GM10248 (cell line): ENCODE measurements at regions of chr2 and their contacts with region 1.

Region 1: DNA sequence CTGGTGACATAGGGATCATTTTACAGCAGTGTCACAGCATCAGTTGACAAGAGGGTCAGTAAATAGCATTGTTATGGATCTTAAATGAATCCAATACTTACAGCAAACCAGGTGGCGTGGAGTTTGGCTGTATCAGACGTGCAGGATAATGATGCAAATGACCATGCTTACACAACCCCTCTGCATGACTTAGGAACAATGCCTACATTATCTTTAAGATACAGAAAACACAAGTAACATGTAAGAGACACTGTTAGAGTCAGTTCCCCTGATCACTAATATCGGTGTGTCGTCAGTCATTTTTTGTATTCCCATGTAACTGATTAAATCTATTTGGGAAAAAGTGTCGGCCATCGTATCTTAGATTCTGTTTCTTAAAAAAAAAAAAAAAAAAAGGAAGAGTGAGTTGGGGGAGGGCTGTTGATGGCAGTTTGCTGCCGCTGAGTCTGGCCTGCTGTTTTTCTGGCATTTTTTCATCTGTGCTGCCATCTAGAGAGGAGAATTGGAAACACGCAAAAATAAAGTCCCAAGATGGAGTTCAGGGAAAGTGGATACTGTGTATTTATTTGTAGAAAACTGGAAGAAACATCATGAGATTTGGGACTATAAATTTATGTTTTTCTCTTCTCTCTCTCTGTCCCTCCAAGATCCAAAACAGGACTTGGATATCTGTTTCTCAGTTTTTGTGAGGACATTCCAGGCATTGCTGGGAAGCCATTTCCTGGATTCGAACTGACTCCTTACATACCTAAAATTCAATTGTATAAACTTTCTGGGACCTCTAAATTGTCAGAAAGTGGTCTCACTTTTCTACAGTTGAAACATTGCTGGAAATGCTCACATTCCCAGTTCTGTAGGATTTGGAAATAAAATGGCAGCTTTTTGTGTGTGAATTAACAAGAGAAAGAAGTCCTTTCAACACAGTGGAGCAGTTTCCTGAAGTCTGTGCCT is 60.3 kb upstream of the AGPS start:
- DNase-seq: peak; percentile 50
- CTCF ChIP-seq: peak; percentile 66

Region 2: DNA sequence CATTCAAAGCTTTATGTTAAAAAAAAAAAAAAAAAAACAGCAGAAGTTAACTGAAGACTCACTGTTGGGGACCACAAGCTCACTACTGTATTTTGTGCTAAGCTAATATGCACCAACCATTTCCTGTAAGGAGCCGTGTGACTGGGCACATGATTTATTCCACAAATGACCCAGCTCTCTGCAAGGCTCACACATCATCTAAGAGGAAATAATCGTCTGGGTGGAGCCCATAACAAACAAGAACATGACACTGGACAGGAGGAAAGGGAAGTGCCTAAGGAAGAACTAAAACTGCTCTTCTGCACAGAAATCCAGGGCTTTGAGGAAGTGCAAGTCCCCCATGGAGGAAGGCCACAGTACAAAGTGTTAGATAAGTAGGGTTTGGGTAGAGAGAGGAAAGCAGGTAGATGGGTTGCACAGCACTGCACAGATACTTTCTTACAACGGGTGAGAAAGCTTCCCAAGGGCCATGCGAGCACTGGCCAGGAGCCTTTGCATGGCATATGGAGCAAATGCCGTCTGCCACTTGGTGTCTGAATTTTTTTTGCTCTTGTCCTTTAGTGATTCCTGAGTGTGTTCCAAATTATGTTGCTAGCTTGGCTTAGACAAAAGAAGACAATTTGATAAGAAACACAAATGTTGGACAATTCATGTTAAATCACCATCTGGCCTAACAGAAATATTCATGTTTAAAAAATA is 92.2 kb before region 1 on chr2:
- CTCF ChIA-PET with region 1: no interaction called
- POLR2A ChIA-PET with region 1: no interaction called
- DNase-seq: no peak
- CTCF ChIP-seq: no peak

Region 3: DNA sequence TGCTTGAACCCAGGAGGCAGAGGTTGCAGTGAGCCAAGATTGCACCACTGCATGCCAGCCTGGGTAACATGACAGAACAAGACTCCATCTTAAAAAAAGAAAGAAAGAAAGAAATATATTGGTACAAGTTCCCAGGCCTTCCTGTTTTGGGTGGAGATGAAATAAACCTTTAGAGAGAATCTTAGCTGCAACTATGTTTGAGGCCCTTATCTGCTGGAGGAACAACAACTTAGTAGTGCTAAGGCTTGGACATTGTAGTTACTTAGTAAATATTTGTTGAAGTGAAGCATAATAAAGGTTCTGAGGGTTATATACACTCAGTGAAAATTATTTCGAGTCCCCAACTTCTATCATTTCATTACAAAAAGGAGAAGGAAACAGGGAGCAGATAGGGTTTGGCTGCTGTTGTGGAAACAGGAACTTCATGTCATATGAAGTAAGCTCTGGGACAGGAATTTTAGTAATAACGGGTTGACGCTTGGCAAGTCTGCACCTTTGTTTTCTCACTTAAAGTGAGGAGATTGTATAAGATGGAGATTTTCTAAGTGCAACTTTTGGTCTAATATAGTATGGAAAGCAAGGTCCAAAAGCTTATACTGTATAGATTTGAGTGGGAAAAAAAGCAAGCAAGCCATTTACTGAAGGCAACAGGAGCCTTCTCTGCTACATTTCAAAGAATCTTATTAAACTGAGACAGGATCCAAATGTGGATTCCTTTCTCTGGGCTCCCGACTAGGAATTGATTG is 20.3 kb after region 1 on chr2:
- CTCF ChIA-PET with region 1: interaction called, 57 read pairs
- POLR2A ChIA-PET with region 1: no interaction called
- DNase-seq: no peak
- CTCF ChIP-seq: no peak

Region 4: GRCh38 chr2:177392373-177393202 is 60.3 kb after region 1 on chr2 and contains the start of gene AGPS:
- CTCF ChIA-PET with region 1: interaction called, 26 read pairs
- POLR2A ChIA-PET with region 1: no interaction called
- DNase-seq: peak; percentile 89
- CTCF ChIP-seq: no peak

Region 5: DNA sequence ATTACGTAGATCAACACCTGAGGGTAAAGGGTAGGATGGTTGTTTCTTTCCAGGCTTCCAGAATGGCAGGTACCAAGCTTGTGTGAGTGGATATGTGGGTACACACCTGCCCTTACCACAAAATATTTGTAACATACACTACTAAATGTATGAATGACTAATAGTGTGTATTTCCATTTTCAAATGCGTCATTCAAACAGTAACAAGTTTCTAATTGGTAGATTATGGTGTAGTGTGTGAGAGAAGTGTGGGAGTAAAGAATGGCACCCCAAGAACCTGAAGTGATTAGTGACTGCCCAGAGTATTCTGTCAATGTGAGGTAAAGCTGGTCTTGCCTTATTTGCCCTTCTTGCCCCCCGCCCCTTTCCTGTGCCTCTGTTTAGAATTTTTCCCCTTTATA is 81.4 kb after region 1 on chr2:
- CTCF ChIA-PET with region 1: interaction called, 130 read pairs
- POLR2A ChIA-PET with region 1: no interaction called
- DNase-seq: no peak
- CTCF ChIP-seq: no peak

Region 6: DNA sequence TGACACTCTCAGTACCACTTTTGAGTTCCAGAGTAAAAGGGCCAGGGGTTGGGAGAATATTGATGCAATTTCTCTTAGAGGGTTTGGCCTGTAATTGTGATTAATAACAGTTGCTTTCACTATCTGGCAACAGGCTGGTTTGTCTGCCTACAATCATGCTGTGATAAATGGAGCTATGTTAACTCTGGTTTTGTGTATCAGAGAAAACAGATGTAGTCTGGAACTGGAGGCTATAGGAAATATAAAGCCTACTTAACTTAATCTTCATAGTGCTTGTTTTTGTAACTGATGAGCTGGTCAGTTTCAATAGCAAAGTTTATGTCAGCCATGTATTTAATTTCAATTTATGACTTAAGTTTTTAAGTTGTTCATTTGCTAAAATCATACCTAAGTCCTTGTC is 198.2 kb after region 1 on chr2:
- CTCF ChIA-PET with region 1: no interaction called
- POLR2A ChIA-PET with region 1: no interaction called
- DNase-seq: no peak
- CTCF ChIP-seq: no peak

Region 7: DNA sequence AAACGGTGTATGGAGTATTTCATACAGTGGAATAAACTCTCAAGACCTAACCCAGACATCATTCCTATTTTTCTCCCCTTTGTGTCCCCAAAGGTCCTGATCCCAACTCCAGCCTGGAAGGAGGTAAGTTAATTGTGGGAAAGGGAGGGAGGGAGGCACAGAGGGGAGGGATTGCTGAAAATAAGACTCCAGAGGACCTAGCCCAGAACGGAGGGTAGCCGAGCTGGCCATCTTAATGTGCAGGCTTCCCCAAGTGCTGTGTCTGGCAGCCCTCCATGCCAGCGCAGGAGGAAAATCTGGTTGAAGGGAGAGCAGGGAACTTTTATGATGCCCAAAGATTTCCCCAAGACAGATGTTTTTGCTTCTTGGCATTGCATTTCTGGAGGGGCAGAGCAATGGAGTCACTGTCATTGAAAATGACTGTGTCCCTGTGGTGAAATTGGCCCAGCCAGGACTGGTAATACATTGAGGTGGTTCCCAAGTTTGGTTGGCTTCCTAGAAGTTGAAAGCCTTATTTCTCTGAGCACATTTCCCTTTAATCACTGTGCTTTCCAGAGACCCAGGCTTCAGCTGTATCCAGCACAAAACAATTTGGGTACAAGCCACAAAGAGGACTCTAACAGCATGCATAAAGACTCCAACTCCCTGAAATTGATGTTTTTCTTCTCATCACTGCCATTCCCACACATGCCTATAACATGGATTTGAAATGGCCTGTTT is 263.0 kb after region 1 on chr2:
- CTCF ChIA-PET with region 1: no interaction called
- POLR2A ChIA-PET with region 1: no interaction called
- DNase-seq: no peak
- CTCF ChIP-seq: no peak

Region 8: DNA sequence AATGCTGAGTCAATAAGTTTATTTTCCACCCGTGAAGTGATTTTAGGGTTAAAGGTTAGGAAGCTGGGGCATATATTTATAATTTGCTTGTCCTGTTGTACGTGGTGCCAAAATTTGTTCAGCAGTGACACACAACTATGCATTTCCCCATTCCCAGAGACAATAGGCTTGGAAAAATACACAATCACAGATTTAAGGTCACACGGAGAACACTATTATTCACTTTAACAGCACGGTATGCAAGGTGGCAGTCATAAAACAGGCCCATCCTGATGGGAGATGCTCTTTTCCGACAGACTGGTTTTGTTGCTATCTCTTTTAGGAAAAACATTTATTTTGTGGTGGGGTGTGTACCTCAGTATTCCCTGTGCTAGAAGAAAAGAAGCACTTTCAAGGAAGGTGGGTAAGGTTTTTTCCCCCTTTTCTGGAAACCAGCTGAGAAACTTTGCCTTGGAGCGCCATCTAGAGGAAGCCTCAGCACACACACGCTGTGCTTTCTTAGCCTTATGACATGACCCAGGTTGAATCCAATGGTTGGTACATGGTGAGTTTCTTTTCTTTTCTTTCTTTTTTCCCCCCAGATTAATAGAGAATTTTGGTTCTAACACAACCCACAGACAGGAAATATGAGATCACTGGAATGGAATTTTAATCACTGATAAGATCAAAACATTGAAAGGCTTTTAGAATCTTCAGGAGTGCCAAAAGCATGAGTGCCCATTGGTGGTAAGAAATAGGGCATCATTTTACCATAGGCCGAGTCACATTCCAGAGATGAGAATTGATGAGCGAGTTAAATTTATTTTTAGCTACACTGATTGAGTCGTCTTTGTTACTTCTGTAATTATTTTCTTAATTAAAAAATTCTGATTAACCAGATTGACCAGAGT is 392.3 kb after region 1 on chr2:
- CTCF ChIA-PET with region 1: interaction called, 56 read pairs
- POLR2A ChIA-PET with region 1: no interaction called
- DNase-seq: peak; percentile 50
- CTCF ChIP-seq: peak; percentile 93